ENCODE measurements at regions of chr1 and their contacts with region 1.

Region 1: GRCh38 chr1:28877132-28877781 is 37.1 kb upstream of the EPB41 start:
- DNase-seq: no peak
- H3K4me3 ChIP-seq: no peak overlapping the region
- CTCF ChIP-seq: peak; percentile 82

Region 2: DNA sequence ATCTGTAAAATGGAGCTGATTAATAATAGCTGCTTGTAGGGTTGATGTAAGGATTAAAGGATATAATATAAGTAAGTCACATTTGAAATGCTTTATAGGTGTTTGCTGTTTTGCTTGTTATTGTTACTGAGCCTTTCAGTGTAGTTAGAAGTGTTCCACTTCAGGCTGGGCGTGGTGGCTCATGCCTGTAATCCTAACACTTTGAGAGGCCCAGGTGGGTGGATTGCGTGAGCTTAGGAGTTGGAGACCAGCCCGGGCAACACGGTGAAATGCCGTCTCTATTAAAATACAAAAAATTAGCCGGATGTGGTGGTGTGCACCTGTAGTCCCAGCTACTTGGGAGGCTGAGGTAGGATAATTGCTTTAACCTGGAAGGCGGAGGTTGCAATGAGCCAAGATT is 312.2 kb before region 1 on chr1:
- CTCF ChIA-PET with region 1: no interaction called
- POLR2A ChIA-PET with region 1: no interaction called
- DNase-seq: no peak
- H3K4me3 ChIP-seq: no peak overlapping the region
- CTCF ChIP-seq: no peak

Region 3: GRCh38 chr1:28602536-28603439 is 274.5 kb before region 1 on chr1:
- CTCF ChIA-PET with region 1: interaction called, 27 read pairs
- POLR2A ChIA-PET with region 1: no interaction called
- DNase-seq: peak; percentile 42
- H3K4me3 ChIP-seq: no peak overlapping the region
- CTCF ChIP-seq: peak; percentile 57

Region 4: GRCh38 chr1:28736450-28737306 is 140.6 kb before region 1 on chr1 and contains the start of gene YTHDF2:
- CTCF ChIA-PET with region 1: interaction called, 15 read pairs
- POLR2A ChIA-PET with region 1: no interaction called
- DNase-seq: peak; percentile 59
- H3K4me3 ChIP-seq: peak within 1 kb of the TSS; percentile 63
- CTCF ChIP-seq: peak; percentile 97

Region 5: DNA sequence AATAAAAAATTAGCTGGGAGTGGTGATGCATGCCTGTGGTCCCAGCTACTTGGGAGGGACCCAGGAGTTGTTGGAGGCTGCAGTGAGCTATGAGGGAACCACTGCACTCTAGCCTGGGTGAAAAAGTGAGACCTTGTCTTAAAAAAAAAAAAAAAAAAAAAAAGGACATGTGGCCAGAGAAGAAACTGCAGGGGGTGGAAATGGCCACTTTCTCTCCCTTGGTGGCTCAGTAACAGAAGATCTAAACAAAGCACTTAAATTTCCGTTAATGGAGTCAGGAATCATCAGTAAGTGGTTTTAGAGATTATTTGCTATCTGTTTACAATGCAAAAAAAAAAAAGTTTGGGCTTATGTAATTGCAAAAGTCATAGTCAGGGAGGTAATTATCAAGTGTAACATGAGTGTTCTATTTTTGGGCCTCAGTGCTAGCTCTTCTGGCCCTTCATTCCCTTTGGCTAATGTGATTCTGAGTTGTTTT is 84.6 kb before region 1 on chr1:
- CTCF ChIA-PET with region 1: interaction called, 471 read pairs
- POLR2A ChIA-PET with region 1: no interaction called
- DNase-seq: no peak
- H3K4me3 ChIP-seq: no peak overlapping the region
- CTCF ChIP-seq: no peak

Region 6: GRCh38 chr1:28865997-28866650 is 11.1 kb before region 1 on chr1:
- CTCF ChIA-PET with region 1: interaction called, 49 read pairs
- POLR2A ChIA-PET with region 1: no interaction called
- DNase-seq: no peak
- H3K4me3 ChIP-seq: no peak overlapping the region
- CTCF ChIP-seq: no peak

Measured in AG04449 (cell line).